GM10248 (cell line): ENCODE measurements at regions of chr5 and their contacts with region 1.

Region 1: DNA sequence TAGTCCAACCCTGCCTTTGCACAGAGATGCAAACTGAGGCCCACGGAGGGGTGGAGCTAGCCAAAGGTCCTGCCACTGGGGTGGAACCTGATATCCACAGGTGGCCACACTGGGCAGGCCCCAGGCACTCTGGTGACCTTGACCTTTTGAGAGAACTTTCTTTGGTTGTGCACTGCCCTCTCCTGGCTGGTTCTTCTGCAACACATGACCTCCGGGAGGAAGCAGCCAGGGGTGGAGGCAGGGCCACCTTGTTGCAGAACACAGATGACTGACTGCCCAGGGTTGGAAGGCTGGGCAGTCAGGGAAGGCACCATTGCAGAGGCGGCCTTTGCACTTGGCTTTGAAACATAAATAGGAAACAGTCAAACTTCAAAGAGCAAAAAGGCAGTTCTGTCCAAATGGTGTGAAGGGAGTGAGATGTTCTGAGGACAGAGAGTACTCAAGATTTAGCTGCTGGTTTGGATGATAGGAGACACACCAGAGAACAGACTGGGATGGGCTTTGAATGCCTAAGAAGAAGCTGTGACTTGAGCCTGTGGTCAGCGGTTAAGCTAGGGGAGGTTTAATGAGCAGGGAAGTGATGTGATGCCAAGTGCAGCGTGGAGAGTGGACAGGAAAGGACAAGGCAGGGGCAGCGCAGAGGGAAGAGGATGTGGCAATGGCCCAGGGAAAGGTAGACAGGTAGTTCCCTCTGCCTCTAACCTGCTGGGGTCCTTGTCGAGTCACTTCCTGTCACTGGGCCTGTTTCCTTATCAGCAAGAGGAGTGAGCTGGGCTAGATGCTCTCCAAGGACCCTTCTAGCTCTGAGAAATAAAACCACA is 6.8 kb upstream of the TCOF1 start:
- DNase-seq: peak; percentile 79
- CTCF ChIP-seq: peak; percentile 78

Region 2: GRCh38 chr5:150129813-150130492 is 220.8 kb before region 1 on chr5:
- CTCF ChIA-PET with region 1: interaction called, 11 read pairs
- POLR2A ChIA-PET with region 1: no interaction called
- DNase-seq: peak; percentile 86
- CTCF ChIP-seq: peak; percentile 86

Region 3: DNA sequence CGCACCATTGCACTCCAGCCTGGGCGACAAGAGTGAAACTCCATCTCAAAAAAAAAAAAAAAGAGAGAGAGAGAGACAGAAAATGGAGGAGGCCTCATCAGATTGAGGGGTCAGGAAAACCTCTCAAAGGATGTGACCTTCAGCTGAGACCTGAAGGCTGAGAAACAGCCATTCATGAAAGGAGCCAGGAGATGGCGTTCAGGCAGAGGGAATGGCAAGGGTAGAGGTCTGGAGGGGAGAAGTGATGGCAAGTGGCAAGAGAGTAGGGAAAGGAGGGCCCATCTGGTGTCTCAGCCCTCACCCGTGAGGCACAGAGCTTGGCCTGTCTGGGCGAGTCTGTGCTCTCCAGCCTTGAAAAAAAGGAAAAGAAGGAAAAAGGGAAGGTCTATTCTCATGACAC is 78.2 kb before region 1 on chr5:
- CTCF ChIA-PET with region 1: interaction called, 13 read pairs
- POLR2A ChIA-PET with region 1: no interaction called
- DNase-seq: no peak
- CTCF ChIP-seq: peak; percentile 33

Region 4: GRCh38 chr5:150339165-150339564 is 11.6 kb before region 1 on chr5:
- CTCF ChIA-PET with region 1: interaction called, 20 read pairs
- POLR2A ChIA-PET with region 1: no interaction called
- DNase-seq: no peak
- CTCF ChIP-seq: no peak

Region 5: DNA sequence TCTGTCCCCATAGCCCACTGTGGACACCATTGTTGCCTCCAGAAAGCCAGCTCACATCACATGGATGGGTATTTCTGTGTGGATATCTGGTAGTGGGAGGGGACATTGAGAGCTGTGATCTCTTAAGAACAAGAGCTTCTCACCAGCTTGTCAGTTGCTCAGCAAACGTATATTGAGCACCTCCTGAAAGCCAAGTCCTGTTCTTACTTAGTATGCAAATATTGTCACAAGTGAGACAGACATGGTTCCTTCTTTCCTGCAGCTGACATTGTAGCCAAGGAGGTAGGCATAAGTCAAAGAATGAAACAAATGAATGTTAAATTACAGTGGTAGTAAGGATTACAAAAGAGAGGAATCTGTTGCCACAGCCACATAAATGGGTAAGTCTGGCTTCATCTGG is 10.6 kb after region 1 on chr5:
- CTCF ChIA-PET with region 1: interaction called, 41 read pairs
- POLR2A ChIA-PET with region 1: no interaction called
- DNase-seq: no peak
- CTCF ChIP-seq: no peak

Region 6: GRCh38 chr5:150376799-150377771 is 26.4 kb after region 1 on chr5:
- CTCF ChIA-PET with region 1: no interaction called
- POLR2A ChIA-PET with region 1: no interaction called
- DNase-seq: no peak
- CTCF ChIP-seq: no peak

Region 7: DNA sequence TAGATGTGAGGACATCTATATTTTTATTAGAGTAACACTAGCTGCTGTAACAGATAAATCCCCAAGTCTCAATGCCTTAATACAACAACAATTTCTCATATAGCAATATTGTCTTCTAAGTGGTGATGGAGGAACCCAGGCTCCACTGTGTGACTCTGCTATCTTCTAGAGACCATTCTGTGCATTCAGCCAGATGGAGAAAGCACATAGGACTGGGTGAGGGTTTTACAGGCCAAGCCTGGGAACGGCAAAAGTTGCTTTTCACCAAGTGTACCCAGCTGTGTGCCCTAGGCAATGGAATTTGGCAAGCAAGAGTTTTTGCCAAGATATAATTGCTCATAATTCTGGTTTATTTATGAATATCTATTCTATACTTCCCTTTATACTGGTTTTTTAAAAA is 338.4 kb after region 1 on chr5:
- CTCF ChIA-PET with region 1: no interaction called
- POLR2A ChIA-PET with region 1: interaction called, 11 read pairs
- DNase-seq: no peak
- CTCF ChIP-seq: no peak